PC-9 (cell line): ENCODE measurements at regions of chr16 and their contacts with region 1.

Region 1: GRCh38 chr16:89922884-89923690 is at the start of gene TUBB3:
- DNase-seq: peak in 1 of 2 experiments; percentile 89
- H3K4me3 ChIP-seq: peak within 1 kb of the TSS; percentile 72
- H3K27ac ChIP-seq: peak within 1 kb of the TSS; percentile 84
- H3K4me1 ChIP-seq: peaks cover 38% of the 10 kb centered on the region
- H3K27me3 ChIP-seq: no peaks in the 10 kb centered on the region
- CTCF ChIP-seq: no peak
- total RNA-seq, gene TUBB3: 79.6 and 105 TPM in 2 replicates

Region 2: DNA sequence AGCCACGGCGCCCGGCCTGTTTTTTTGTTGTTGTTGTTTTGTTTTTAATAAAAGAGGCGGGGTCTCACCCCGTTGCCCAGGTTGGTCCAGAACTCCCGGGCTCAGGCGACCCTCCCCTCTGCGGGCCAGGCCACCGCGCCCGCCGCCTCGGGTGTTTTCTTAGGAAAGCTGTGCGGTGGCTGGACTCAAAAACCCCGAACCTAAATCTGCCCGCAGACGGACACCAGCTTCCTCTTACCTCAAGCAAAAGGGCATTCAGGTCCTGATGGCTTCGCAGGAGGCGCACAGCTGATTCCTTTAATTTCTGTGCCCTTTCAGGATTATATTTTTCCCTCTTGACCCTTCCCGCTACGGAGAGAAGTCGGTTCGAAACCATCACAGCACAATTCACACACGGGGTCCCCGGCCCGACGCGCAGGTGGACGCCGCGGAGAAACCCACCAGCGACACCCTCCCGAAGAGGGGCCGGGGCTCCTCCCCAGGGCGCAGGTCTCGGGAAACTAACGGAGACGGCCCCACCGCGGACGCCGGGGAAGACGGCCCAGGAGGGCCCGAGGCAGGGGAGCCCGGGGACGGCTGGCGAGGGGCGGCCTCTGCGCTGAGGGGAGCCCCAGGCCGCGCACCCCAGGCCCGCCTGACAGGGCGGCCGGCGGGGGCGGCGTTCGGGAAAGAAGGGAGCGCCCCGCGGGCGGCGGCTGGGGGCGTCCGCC is 107.3 kb before region 1 on chr16:
- CTCF ChIA-PET with region 1: no interaction called
- POLR2A ChIA-PET with region 1: no interaction called
- intact Hi-C with region 1: no loop called
- DNase-seq: peak in 1 of 2 experiments; percentile 28
- H3K4me3 ChIP-seq: peak overlapping the region; percentile 75
- H3K27ac ChIP-seq: no peak overlapping the region
- H3K4me1 ChIP-seq: peaks cover 18% of the 10 kb centered on the region
- H3K27me3 ChIP-seq: no peaks in the 10 kb centered on the region
- CTCF ChIP-seq: no peak

Region 3: GRCh38 chr16:89945670-89946069 is 22.6 kb after region 1 on chr16:
- CTCF ChIA-PET with region 1: no interaction called
- POLR2A ChIA-PET with region 1: no interaction called
- intact Hi-C with region 1: loop called (anchors 2 kb)
- DNase-seq: peak in 1 of 2 experiments; percentile 53
- H3K4me3 ChIP-seq: no peak overlapping the region
- H3K27ac ChIP-seq: no peak overlapping the region
- H3K4me1 ChIP-seq: no peaks in the 10 kb centered on the region
- H3K27me3 ChIP-seq: peaks cover 31% of the 10 kb centered on the region
- CTCF ChIP-seq: peak; percentile 41; the same call in 1 of the 2 replicates

Region 4: GRCh38 chr16:90046971-90047713 is 124.1 kb after region 1 on chr16:
- CTCF ChIA-PET with region 1: no interaction called
- POLR2A ChIA-PET with region 1: interaction called, 3 read pairs
- intact Hi-C with region 1: loop called (anchors 10 kb)
- DNase-seq: peak; percentile 58 to 80
- H3K4me3 ChIP-seq: peak overlapping the region; percentile 77
- H3K27ac ChIP-seq: no peak overlapping the region
- H3K4me1 ChIP-seq: peaks cover 34% of the 10 kb centered on the region
- H3K27me3 ChIP-seq: no peaks in the 10 kb centered on the region
- CTCF ChIP-seq: no peak